Common myeloid progenitor, CD34-positive (primary cell): ENCODE measurements at regions of chr5 and their contacts with region 1.

Region 1: GRCh38 chr5:141369994-141370848 is at the start of gene PCDHGB3:
- DNase-seq: peak; percentile 65 to 85 (median 80)
- H3K4me3 ChIP-seq: peak within 1 kb of the TSS; percentile 40 to 78 (median 59)
- H3K27ac ChIP-seq: no peak within 1 kb of the TSS
- H3K4me1 ChIP-seq: peaks cover 0 to 6% (median under 1%) of the 10 kb centered on the region in 4 experiments
- H3K27me3 ChIP-seq: peaks cover 13 to 82% (median 23%) of the 10 kb centered on the region in 5 experiments

Region 2: DNA sequence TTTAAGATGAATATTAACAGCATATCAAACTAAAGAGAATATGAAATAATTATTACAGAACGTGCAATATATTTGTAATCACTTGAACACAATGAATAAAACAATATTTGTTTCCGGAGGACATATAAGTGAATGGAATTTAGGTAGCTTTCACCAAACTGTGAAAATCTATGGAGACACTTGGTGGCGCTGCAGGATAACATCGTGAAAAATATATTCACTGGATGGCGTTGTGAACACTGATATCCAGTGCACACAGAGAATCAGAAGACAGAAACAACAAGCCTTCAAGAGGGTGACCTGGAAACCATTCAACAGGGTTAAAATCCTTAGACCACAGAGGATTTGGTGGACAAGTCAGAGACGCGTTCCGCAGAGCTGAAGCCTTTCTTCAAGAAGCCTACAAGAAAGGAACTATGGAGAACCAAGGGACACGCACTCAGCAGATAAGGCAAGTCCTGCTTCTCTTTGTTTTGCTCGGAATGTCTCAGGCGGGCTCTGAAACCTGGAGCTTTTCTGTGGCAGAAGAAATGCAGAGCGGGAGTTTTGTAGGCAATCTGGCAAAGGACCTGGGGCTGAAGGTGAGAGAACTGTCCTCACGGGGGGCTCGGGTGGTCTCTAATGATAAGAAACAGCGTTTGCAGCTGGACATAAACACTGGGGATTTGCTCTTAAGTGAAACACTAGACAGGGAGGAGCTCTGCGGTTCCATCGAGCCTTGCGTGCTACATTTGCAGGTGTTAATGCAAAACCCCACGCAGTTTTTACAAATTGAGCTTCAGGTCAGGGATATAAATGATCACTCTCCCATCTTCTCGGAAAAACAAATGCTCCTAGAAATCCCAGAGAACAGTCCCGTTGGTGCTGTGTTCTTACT is 170.6 kb before region 1 on chr5 and contains the start of gene PCDHB11:
- CTCF ChIA-PET with region 1: no interaction called
- POLR2A ChIA-PET with region 1: no interaction called
- DNase-seq: peak in 2 of 3 donors; percentile 2 to 3
- H3K4me3 ChIP-seq: peak within 1 kb of the TSS in 1 of 7 experiments; percentile 19
- H3K27ac ChIP-seq: no peak within 1 kb of the TSS
- H3K4me1 ChIP-seq: no peaks in the 10 kb centered on the region
- H3K27me3 ChIP-seq: peaks cover 3 to 31% (median 6%) of the 10 kb centered on the region in 5 experiments

Region 3: GRCh38 chr5:141398608-141399007 is 28.4 kb after region 1 on chr5:
- CTCF ChIA-PET with region 1: interaction called, 15 read pairs
- POLR2A ChIA-PET with region 1: no interaction called
- DNase-seq: no peak
- H3K4me3 ChIP-seq: peak overlapping the region in 1 of 7 experiments; percentile 28
- H3K27ac ChIP-seq: no peak overlapping the region
- H3K4me1 ChIP-seq: no peaks in the 10 kb centered on the region
- H3K27me3 ChIP-seq: peaks cover 24 to 70% (median 28%) of the 10 kb centered on the region in 5 experiments